Aorta (tissue), 5 donors: ENCODE measurements at regions of chr16 and their contacts with region 1.

Region 1: GRCh38 chr16:10737068-10737625 is 6.5 kb upstream of the NUBP1 start:
- DNase-seq: no peak
- ATAC-seq: peak; percentile 89
- H3K4me3 ChIP-seq: no peak overlapping the region
- H3K27ac ChIP-seq: peak overlapping the region; percentile 85 to 97
- H3K4me1 ChIP-seq: peaks cover 0 to 3% of the 10 kb centered on the region in 2 donors
- H3K27me3 ChIP-seq: no peaks in the 10 kb centered on the region

Region 2: DNA sequence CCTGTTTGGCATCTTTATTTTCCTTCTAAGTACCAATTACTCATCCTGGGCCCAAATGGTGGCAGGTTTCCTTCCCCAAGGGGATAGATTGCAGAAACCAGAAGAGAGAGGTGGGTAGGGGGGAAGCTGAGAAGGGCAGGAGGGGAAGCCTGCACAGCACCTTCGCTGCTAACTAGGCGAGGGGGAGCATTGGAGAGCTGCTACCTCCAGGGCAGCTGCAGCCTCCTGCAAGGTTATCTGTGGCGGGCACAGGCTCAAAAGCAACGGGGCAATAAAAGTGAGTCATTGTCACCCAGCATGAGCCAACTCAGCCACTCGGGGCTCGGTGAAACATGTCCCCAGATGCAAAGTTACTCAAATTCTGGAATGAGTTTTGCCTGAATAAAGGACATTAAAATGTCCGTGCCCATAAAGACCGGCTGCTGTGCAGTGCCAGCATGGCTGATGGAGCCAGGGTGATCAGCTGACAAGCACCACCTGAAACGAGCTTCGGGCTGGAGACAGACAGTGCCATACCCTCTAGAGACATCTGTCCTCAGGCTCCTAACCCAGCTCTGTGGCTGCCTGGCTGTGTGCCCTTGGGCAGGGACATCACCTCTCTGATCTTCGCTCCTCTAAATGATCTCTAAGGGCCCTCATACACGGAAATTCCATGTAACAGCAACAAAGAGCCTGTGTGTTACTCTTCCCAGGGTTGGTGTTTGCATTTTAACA is 486.9 kb before region 1 on chr16:
- intact Hi-C with region 1: loop called in 1 of 2 experiments (anchors 5 kb)
- DNase-seq: no peak
- ATAC-seq: no peak
- H3K4me3 ChIP-seq: no peak overlapping the region
- H3K27ac ChIP-seq: no peak overlapping the region
- H3K4me1 ChIP-seq: no peaks in the 10 kb centered on the region
- H3K27me3 ChIP-seq: no peaks in the 10 kb centered on the region

Region 3: GRCh38 chr16:10256784-10257641 is 480.1 kb before region 1 on chr16:
- intact Hi-C with region 1: loop called (anchors 2 to 5 kb)
- DNase-seq: peak in 1 of 2 donors; percentile 83
- ATAC-seq: no peak
- H3K4me3 ChIP-seq: no peak overlapping the region
- H3K27ac ChIP-seq: no peak overlapping the region
- H3K4me1 ChIP-seq: no peaks in the 10 kb centered on the region
- H3K27me3 ChIP-seq: no peaks in the 10 kb centered on the region

Region 4: DNA sequence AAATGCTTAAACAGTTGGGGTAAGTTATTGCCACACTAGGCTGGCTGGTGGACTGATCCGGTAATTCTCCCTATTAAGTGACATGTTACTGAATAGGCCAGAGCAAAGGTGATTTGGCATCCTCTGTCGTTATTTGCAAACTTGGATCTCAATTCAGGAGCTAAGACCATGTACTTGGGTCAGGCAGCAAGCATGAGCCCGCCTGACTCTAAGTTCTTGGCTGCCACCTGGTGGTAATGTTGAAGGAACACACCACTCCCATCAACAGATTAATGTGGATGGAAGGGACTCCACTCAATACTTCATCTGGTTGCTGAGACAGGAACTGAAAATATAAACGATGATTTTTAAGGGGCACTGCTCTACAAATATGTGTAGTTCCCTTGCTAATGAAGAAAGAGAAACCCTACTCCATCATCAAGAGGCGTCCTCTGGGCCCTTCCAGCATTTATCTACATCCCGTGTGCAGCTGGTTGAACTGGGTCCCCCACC is 227.6 kb before region 1 on chr16:
- intact Hi-C with region 1: loop called (anchors 2 kb)
- DNase-seq: peak in 1 of 2 donors; percentile 56
- ATAC-seq: peak; percentile 85
- H3K4me3 ChIP-seq: no peak overlapping the region
- H3K27ac ChIP-seq: no peak overlapping the region
- H3K4me1 ChIP-seq: no peaks in the 10 kb centered on the region
- H3K27me3 ChIP-seq: no peaks in the 10 kb centered on the region

Region 5: GRCh38 chr16:10579965-10580882 is 156.9 kb before region 1 on chr16 and contains the start of gene EMP2:
- intact Hi-C with region 1: loop called in 1 of 2 experiments (anchors 2 kb)
- DNase-seq: peak; percentile 88 to 96
- ATAC-seq: peak; percentile 95
- H3K4me3 ChIP-seq: peak within 1 kb of the TSS; percentile 79 to 90
- H3K27ac ChIP-seq: peak within 1 kb of the TSS; percentile 58 to 88
- H3K4me1 ChIP-seq: no peaks in the 10 kb centered on the region
- H3K27me3 ChIP-seq: no peaks in the 10 kb centered on the region
- total RNA-seq, gene EMP2: 133 to 143 TPM

Region 6: DNA sequence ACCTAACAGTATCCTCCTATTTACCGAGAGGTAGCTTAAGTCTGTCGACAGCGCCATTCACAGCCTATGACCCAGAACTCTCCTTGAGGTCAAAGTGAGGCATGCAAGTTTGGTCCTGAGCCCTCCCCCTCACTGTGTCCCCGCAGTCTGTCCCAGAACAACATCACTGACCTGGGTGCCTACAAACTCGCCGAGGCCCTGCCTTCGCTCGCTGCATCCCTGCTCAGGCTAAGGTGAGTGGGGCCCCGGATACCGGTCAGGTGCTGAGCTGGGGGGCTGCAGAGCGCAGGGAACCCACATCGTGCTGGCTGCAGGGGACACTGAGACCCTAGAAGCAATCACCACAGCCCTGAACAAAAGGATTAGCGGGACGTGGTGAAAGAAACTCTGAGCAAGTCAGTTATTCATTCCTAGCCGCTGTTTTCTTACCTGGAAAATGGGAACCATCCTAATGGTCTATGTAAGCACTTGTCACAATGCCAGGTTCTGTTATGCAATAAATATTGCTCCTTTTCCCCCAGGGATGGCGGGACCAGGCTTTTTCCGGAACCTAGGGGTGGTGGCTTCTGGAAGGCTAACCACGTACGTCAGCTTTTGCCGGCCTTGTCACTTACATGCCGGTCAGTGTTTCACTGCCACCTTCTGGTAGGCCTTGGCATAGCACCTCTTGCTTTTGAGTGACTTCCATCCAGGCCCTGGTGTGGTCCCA is 181.3 kb after region 1 on chr16:
- intact Hi-C with region 1: loop called (anchors 2 to 5 kb)
- DNase-seq: peak; percentile 96 to 97
- ATAC-seq: peak; percentile 94
- H3K4me3 ChIP-seq: no peak overlapping the region
- H3K27ac ChIP-seq: no peak overlapping the region
- H3K4me1 ChIP-seq: no peaks in the 10 kb centered on the region
- H3K27me3 ChIP-seq: no peaks in the 10 kb centered on the region